GM12878 (cell line): ENCODE measurements at regions of chr10 and their contacts with region 1.

Region 1: DNA sequence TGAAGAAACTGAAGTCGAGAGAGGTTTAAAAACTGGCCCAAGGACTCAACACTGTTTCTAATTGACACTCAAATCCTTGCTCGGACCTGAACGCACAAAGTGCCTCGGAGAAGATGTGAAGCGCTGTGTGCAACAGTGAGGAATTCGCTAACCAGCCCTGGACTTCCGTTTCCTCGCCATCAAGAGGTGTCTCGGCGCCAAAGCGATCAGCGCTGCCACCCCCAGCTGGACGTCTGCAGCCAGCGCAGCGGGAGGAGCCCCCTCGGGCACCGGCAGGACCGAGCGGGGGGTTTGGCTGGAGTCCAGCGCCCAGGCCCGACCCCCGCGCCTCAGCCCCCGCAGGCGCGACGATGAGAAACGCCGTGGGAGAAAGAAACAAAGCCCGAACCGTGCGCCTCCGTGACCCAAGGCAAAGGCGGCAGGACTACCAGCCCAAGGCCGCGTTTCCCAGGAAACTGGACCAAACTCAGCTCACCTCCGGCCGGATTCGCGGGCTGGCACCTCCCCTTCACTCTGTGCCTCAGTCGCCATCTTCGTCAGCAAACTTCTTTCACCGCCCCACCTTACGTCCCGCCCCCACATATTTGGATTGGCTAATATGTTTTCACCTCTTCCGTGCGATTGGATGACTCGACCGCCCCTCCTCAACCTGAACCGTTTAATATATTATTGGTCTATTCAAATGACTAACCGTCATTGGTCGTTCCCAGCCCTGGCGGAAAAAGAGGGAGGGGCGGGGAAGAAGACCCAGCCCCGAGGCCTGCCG is at the start of gene ARHGAP19:
- DNase-seq: peak; percentile 95
- ATAC-seq: peak; percentile 98
- H3K4me3 ChIP-seq: peak within 1 kb of the TSS; percentile 90
- H3K27ac ChIP-seq: peak within 1 kb of the TSS; percentile 60
- H3K4me1 ChIP-seq: no peaks in the 10 kb centered on the region; the same call in 1 of the 2 replicates
- H3K27me3 ChIP-seq: no peaks in the 10 kb centered on the region
- CTCF ChIP-seq: 0 out of 6 replicates have a peak, but pooled peaks of 1 of the 3 experiments have one; percentile 6
- EP300 ChIP-seq: no peak
- POLR2A ChIP-seq: peak; percentile 86
- RAD21 ChIP-seq: no peak
- polyA plus RNA-seq, gene ARHGAP19: 13.3 to 16.1 TPM

Region 2: GRCh38 chr10:97334370-97335175 is 42.3 kb after region 1 on chr10 and contains the start of gene FRAT2:
- CTCF ChIA-PET with region 1: no interaction called
- POLR2A ChIA-PET with region 1: interaction called, 5 read pairs
- RAD21 ChIA-PET with region 1: no interaction called
- SMC1A ChIA-PET with region 1: interaction called, 3 read pairs
- in situ Hi-C with region 1: no loop called
- intact Hi-C with region 1: loop called (anchors 5 kb)
- DNase-seq: peak; percentile 47
- ATAC-seq: peak; percentile 93
- H3K4me3 ChIP-seq: peak within 1 kb of the TSS; percentile 89
- H3K27ac ChIP-seq: peak within 1 kb of the TSS; percentile 83
- H3K4me1 ChIP-seq: no peaks in the 10 kb centered on the region
- H3K27me3 ChIP-seq: peaks cover 0 to 9% of the 10 kb centered on the region in 2 experiments; a peak in 1 of 4 replicates
- CTCF ChIP-seq: no peak
- EP300 ChIP-seq: no peak
- POLR2A ChIP-seq: peak; percentile 76
- RAD21 ChIP-seq: no peak
- polyA plus RNA-seq, gene FRAT2: 0.69 to 1.8 TPM

Region 3: DNA sequence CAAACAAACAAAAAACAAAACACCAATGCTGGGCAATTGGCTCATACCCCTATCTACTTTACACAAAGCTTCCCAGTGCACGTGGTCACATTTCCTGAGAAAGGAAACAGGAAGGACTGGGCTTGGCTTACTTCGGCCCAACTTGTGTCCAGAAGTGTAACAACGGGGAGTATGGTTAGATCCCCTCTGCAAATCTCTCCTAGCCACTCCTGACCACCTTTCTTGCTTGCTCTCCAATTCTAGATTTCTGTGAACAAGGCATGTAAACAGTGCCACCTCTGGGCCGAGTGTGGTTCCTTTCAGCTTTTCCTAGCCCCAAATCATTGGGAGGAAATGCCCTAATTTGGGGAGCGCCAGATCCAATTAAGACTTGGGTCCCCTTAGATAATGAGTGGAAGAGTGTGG is 63.3 kb after region 1 on chr10:
- CTCF ChIA-PET with region 1: no interaction called
- POLR2A ChIA-PET with region 1: no interaction called
- RAD21 ChIA-PET with region 1: no interaction called
- SMC1A ChIA-PET with region 1: no interaction called
- in situ Hi-C with region 1: no loop called
- intact Hi-C with region 1: no loop called
- DNase-seq: no peak
- ATAC-seq: no peak
- H3K4me3 ChIP-seq: no peak overlapping the region
- H3K27ac ChIP-seq: no peak overlapping the region
- H3K4me1 ChIP-seq: no peaks in the 10 kb centered on the region
- H3K27me3 ChIP-seq: no peaks in the 10 kb centered on the region
- CTCF ChIP-seq: peak in 1 of 3 experiments; percentile 37; a peak in 1 of 6 replicates
- EP300 ChIP-seq: no peak
- POLR2A ChIP-seq: no peak
- RAD21 ChIP-seq: peak; percentile 34

Region 4: DNA sequence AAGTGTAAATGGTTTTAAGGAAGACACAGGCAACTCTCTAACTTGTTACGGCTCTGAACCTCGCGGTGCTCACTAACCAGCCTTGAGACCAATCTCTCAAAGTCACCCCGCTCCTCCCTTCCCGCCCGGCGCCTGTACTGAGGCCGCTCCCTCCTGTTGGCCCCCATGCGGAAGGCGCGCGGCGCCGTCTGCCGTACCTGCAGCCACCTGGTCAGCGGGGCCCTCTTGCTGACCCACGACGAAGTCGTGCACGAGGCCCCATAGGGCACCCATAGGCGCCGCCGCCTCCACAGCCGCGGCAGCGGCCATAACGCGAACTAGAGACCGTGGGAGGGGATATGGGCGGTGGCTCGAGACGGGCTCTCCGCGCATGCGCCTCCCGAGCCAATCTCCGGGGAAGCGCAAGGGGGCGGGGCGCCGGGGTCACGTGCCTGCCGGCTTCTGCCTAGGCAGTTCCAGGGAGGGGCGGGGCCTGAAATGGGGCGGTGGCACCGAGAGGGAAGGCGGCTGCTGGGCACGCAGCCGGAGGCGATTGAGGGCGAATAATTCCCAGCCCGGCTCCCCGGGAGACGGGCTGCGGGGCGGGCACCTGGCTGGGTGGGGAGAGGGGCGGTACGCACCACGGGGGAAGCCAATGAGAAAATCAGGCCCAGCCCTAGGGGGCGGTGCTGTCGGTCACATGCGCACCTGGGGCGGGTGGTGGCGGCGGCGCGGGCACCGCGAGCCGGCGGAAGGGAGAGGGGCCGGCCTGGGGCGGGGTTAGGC is 206.0 kb after region 1 on chr10 and contains the start of gene MMS19:
- CTCF ChIA-PET with region 1: no interaction called
- POLR2A ChIA-PET with region 1: no interaction called
- RAD21 ChIA-PET with region 1: no interaction called
- SMC1A ChIA-PET with region 1: no interaction called
- in situ Hi-C with region 1: no loop called
- intact Hi-C with region 1: loop called (anchors 1 kb)
- DNase-seq: peak; percentile 77
- ATAC-seq: peak; percentile 93
- H3K4me3 ChIP-seq: peak within 1 kb of the TSS; percentile 90
- H3K27ac ChIP-seq: peak within 1 kb of the TSS; percentile 87
- H3K4me1 ChIP-seq: peaks cover 5% of the 10 kb centered on the region
- H3K27me3 ChIP-seq: peaks cover 6 to 14% of the 10 kb centered on the region in 2 experiments
- CTCF ChIP-seq: no peak
- EP300 ChIP-seq: no peak
- POLR2A ChIP-seq: peak; percentile 95
- RAD21 ChIP-seq: no peak
- polyA plus RNA-seq, gene MMS19: 40.2 to 74.3 TPM